A673 (cell line): ENCODE measurements at regions of chr6 and their contacts with region 1.

Region 1: DNA sequence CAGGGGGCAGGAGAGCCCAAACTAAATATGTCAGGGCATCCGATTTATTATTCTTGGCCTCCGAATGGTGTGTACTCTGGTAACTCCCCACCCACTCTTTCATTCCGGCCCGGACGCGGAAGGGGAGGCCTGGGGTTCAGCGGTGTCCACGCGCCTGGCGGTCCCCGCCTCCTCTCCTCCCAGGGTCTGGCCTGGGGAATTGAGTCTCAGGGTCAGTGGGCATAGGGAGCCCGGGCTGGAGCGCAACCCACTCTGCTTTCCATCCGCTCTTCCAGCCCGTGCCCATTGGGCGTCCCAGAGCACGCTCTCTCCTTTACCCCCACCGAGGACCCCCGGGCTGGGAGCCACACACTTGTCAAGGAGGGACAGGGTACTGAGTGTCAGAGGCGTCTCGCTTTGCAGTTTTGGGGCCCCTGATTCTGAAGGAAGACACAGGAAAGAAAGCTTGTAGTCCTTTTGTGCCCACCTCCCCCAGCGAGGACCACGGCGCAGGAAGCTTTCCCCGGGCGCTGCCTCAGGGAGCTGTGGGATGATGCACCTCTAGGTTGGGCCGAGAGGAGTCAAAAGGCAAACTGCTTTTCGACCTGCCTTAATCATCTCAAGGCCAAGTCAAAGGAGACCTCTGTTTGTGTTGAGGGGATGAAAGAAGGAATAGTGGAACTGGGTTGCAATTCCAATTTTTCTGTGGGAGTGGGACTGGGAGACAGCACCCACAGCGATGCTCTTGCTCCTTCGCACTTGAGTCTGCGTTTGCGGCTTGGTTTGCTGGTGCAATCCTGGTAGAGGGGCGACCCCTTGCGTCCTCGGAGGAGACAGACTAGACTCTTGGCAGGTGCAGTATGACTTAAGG is 2.5 kb downstream of the RSPO3 start:
- DNase-seq: peak; percentile 88
- H3K4me3 ChIP-seq: peak overlapping the region; percentile 11
- H3K27ac ChIP-seq: no peak overlapping the region
- H3K4me1 ChIP-seq: peaks cover 14% of the 10 kb centered on the region
- H3K27me3 ChIP-seq: peaks cover 30% of the 10 kb centered on the region
- CTCF ChIP-seq: peak; percentile 95

Region 2: GRCh38 chr6:125314019-125314581 is 1806.9 kb before region 1 on chr6:
- CTCF ChIA-PET with region 1: no interaction called
- POLR2A ChIA-PET with region 1: no interaction called
- intact Hi-C with region 1: loop called (anchors 10 kb)
- DNase-seq: peak; percentile 82
- H3K4me3 ChIP-seq: no peak overlapping the region
- H3K27ac ChIP-seq: no peak overlapping the region
- H3K4me1 ChIP-seq: no peaks in the 10 kb centered on the region
- H3K27me3 ChIP-seq: no peaks in the 10 kb centered on the region
- CTCF ChIP-seq: peak; percentile 93

Region 3: DNA sequence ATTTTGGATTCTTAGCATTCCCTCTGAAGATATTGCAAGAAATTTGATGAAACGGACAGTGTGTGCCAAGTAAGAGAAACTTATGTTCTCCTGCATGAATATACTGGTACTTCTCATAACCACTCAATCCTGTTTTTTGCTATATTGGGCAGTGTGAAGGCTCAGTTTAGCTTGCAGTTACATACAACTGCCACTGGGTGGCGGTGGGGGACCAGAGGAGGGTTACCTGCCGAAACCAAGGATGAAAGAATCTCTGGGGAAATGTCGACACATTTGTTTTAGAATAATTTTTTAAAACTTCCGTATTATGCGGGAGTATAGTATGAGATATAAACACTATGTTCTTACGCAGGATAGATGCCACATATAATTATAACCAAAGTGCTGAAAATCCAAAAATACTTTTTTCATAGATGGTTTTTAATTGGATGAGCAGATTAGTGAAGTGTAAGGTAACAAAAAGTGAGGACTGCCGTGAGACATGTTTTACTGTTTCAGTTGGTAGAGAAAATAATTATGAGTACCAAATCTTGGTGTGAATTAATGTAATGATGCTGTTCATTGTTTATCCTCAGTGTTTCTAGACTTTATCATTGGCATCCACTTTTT is 1124.9 kb before region 1 on chr6:
- CTCF ChIA-PET with region 1: no interaction called
- POLR2A ChIA-PET with region 1: no interaction called
- intact Hi-C with region 1: loop called (anchors 2 kb)
- DNase-seq: peak; percentile 82
- H3K4me3 ChIP-seq: no peak overlapping the region
- H3K27ac ChIP-seq: no peak overlapping the region
- H3K4me1 ChIP-seq: peaks cover 5% of the 10 kb centered on the region
- H3K27me3 ChIP-seq: no peaks in the 10 kb centered on the region
- CTCF ChIP-seq: peak; percentile 98

Region 4: DNA sequence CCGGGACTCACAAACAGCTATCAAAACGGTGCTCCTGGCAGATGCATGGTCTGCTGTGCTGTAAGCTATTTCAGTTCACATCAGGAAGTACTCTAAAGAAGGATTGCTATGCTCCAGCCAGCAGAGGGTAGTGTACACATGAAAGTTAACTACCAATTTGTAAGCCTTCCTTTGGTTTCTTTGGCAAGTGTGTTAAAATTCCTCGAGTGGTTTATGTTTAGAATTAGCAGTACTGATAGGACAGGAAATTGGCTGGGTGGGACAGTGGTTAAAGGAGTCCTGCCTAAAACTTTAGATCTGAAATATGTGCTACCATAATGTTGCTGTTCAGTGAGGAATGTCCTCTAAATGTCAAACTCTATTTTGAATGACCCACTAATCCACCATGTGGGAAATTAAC is 1087.3 kb before region 1 on chr6:
- CTCF ChIA-PET with region 1: no interaction called
- POLR2A ChIA-PET with region 1: no interaction called
- intact Hi-C with region 1: loop called (anchors 10 kb)
- DNase-seq: peak; percentile 84
- H3K4me3 ChIP-seq: no peak overlapping the region
- H3K27ac ChIP-seq: no peak overlapping the region
- H3K4me1 ChIP-seq: no peaks in the 10 kb centered on the region
- H3K27me3 ChIP-seq: no peaks in the 10 kb centered on the region
- CTCF ChIP-seq: peak; percentile 71

Region 5: DNA sequence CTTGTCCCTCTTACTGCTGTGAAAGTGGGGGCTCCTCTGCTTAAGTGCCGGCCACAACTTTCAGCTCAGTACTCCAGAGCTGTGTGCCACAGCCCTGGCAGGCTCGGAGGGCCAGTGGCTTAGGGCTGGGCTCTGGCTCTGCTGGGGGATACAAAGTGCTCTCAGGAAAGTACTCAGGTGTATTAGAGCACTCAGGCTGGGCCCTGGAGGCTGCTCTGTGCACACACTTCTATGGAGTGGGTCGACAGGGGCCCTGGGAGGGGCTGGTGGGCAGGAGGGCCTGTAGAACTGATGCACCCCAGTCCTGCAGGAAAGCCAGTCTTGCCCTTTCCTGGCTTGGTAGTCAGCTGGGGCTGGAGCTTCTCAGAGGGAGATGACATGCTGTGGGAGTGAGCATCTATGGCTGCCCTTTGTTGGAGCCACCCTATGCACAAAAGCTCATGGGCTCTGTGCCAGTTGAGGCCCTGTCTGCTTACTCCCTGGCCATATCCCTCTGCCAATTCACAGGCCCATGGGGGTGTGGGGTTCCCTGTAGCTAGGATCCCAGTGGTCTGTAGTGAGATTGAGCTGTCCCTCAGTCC is 759.1 kb before region 1 on chr6:
- CTCF ChIA-PET with region 1: no interaction called
- POLR2A ChIA-PET with region 1: no interaction called
- intact Hi-C with region 1: loop called (anchors 1 kb)
- DNase-seq: peak; percentile 15
- H3K4me3 ChIP-seq: no peak overlapping the region
- H3K27ac ChIP-seq: no peak overlapping the region
- H3K4me1 ChIP-seq: peaks cover 2% of the 10 kb centered on the region
- H3K27me3 ChIP-seq: no peaks in the 10 kb centered on the region
- CTCF ChIP-seq: no peak

Region 6: DNA sequence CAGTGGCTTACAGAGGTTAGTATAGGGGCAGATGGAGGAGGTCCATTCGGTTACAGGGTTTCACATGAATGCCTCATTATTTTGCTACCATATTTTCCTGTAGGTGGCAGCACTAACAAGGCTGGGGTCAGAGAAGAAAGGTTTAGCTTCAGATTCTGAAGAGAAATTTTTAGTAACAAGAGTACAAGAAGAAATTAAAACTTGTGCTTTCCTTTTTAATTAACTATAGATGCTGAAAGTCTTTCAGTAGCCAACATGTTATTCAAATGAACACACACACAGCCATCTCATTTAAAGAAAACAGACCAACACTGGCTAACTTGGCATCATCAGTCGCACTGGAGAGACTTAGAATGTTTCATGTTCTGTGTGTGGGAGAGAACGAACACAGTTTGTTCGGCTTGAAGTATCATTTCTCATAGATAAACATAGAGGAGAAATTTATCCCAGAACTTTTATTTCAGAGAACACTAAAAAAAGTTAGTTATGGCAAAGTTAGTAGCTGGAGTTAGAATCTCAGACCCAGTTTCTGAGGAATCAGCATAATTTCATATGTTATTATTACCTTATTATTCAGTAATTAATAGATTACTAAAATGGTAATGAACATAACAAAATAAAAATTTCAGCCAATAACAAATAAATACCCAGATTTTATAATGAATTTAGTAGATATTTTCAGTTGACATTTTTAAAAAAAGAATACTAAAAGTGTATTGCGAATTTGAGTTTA is 316.5 kb before region 1 on chr6:
- CTCF ChIA-PET with region 1: interaction called, 5 read pairs
- POLR2A ChIA-PET with region 1: no interaction called
- intact Hi-C with region 1: loop called (anchors 2 kb)
- DNase-seq: peak; percentile 78
- H3K4me3 ChIP-seq: no peak overlapping the region
- H3K27ac ChIP-seq: no peak overlapping the region
- H3K4me1 ChIP-seq: no peaks in the 10 kb centered on the region
- H3K27me3 ChIP-seq: no peaks in the 10 kb centered on the region
- CTCF ChIP-seq: peak; percentile 83

Region 7: GRCh38 chr6:127190552-127190951 is 69.5 kb after region 1 on chr6:
- CTCF ChIA-PET with region 1: no interaction called
- POLR2A ChIA-PET with region 1: no interaction called
- intact Hi-C with region 1: loop called (anchors 2 kb)
- DNase-seq: peak; percentile 54
- H3K4me3 ChIP-seq: no peak overlapping the region
- H3K27ac ChIP-seq: no peak overlapping the region
- H3K4me1 ChIP-seq: no peaks in the 10 kb centered on the region
- H3K27me3 ChIP-seq: no peaks in the 10 kb centered on the region
- CTCF ChIP-seq: peak; percentile 80

Region 8: GRCh38 chr6:127366281-127367022 is 245.4 kb after region 1 on chr6:
- CTCF ChIA-PET with region 1: no interaction called
- POLR2A ChIA-PET with region 1: no interaction called
- intact Hi-C with region 1: no loop called
- DNase-seq: peak; percentile 92
- H3K4me3 ChIP-seq: no peak overlapping the region
- H3K27ac ChIP-seq: peak overlapping the region; percentile 70
- H3K4me1 ChIP-seq: peaks cover 7% of the 10 kb centered on the region
- H3K27me3 ChIP-seq: no peaks in the 10 kb centered on the region
- CTCF ChIP-seq: no peak